Right ventricle myocardium superior (tissue), 1 donor: ENCODE measurements at regions of chr3 and their contacts with region 1.

Region 1: GRCh38 chr3:9428411-9428810 is 31.0 kb downstream of the SETD5 start:
- DNase-seq: no peak
- ATAC-seq: no peak

Region 2: DNA sequence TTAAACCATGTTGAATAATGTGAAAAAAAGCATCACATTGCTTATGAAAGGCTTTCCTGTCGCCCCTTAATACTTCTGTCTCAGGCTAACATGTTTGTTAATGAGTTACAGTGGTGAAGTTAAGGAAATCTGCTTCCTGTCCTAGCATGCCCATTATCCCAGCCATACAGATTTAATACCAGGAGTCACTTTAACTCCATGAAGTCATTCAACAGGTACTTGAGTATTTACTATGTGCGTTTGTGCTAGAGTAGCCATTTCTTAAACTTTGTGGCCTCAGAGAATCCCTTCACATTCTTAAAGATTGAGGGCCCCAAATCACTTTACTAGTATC is 41.1 kb before region 1 on chr3:
- intact Hi-C with region 1: loop called (anchors 5 kb)
- DNase-seq: no peak
- ATAC-seq: no peak

Region 3: GRCh38 chr3:9397906-9398699 is 30.3 kb before region 1 on chr3:
- intact Hi-C with region 1: no loop called
- DNase-seq: peak; percentile 50
- ATAC-seq: no peak

Region 4: GRCh38 chr3:9496893-9497292 is 68.5 kb after region 1 on chr3:
- intact Hi-C with region 1: no loop called
- DNase-seq: no peak
- ATAC-seq: no peak